Posterior cingulate gyrus (tissue), 11 donors: ENCODE measurements at regions of chr13 and their contacts with region 1.

Region 1: GRCh38 chr13:82356667-82357410 is 1525.4 kb downstream of the SLITRK1 start:
- DNase-seq: no peak

Region 2: DNA sequence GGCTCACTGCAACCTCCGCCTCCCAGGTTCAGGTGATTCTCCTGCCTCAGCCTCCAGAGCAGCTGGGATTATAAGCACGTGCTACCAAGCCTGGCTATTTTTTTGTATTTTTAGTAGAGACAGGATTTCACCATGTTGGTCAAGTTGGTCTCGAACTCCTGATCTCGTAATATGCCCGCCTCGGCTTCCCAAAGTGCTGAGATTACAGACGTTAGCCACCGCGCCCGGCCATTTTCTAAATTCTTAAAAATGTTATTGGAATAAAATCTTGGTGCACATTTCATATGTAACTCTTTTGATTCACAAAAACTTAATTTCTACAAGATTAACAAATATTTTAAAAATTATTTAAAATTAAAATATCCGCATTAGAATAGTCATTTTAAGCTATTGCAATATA is 535.6 kb before region 1 on chr13:
- intact Hi-C with region 1: no loop called
- DNase-seq: no peak

Region 3: DNA sequence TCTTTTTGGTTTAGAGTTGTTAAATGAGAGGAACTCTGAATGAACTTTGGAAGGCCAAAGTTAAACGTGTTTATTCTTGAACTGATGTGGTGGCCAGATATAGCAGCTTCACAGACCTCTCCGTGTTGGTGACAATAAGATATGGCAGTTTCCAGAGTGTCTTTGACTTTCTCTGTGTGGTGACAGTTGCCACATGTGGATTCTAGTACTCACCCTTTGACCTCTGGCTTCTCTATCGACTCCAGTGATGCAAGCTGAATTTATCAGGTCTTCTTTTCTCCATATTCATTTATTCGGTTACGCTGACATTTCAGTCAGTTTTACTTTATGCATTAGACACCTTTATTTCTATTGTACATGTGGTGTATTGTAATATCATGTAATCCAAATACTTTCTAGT is 55.9 kb after region 1 on chr13:
- intact Hi-C with region 1: no loop called
- DNase-seq: no peak

Region 4: DNA sequence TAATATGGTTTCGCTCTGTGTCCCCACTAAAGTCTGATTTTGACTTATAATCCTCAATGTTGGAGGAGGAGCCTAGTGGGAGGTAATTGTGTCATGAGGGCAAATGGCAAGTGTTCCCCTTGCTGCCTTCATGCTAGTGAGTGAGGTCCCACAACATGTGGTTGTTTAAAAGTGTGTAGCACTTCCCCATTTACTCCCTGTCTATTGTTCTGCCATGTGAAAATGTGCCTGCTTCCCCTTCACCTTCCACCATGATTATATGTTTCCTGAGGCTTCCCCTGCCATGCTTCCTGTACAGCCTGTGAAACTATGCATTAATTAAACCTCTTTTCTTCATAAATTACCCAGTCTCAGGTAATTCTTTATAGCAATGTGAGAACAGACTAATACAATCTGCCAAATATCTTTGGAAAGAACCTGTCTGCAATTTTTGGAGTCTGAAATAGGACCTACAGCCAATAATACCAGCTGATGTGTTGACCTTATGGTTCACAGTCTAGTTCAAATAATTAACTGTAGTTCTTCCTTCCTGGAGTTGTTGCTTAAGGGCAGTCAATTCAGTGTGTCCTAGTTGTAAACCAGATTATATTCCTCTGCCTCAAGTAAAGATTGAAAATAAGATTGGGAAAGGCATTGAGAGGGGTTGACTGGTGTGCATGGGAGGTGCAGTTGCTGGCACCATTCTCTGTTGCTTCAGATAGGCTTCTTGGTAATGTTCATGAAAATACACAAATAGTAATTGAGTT is 82.5 kb after region 1 on chr13:
- intact Hi-C with region 1: no loop called
- DNase-seq: no peak

Region 5: DNA sequence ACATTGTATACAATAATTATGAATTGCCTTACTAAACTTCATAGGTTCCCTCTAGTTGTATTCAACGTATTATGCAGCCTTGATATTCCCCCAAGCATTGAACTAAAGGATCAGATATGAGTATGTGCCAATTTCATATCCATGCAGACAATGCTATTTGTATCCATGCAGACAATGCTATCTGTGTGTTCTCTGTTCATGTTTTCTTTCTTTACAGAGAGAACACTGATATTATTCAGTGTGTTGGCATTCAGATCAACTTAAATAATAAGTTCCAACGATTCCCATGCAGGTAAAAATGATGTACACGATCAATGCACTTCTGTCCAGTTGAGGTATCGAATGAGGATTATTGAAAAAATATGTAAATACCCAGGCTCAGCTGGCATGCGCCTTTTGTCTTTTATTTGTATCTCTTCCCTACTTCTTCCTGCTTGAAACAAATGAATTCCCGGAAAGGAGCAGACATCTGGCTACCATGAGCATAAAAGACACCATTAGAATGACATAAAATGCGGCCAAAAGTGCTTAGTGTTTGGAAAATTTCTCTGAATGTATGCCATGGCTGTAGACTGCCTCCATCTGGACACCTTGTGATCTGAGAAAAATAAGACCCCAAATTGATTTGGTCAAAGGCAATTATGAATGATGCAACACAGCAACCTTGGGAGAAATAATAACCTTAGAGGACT is 793.9 kb after region 1 on chr13:
- intact Hi-C with region 1: loop called (anchors 10 kb)
- DNase-seq: peak in 1 of 10 donors; percentile 11